Natural killer cell (primary cell): ENCODE measurements at regions of chr2 and their contacts with region 1.

Region 1: DNA sequence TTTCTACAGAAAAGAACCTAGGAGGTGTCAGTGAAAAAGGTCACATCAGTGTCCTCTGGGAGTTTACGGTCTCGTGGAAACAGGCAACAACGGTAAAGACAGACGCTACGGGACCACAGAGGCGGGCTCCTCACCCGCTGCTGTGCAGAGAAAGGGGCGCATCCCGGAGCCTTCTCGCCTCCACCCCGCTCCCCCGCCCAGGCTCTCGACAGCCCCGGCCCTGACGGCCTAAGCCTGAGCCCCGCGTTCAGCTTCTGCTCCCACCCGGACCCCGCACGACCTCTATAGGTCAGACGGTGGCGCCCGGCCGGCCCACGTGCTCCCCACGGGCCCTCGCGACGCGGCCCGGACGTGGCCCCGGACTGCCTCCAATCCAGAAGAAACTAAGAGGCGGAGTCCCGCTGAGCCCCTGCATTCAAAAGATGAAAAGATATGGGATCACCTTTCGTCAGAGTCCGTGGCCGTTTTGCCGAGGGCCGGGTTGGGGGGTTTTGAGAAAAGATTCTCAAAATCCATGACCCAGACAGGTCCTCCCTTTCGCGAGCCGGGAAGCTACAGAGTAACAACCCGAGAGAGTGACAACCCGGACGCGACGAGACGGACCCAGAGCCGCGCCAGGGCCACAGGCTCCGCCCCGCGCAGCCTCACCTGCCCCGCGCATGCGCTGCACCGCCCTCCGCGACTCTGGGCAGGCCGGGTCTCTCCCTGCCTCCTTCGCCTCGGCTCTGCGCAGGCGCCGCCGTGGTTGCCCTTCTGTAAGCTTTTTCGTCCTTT is at the start of gene ZC3H8:
- DNase-seq: peak; percentile 96 to 98
- ATAC-seq: peak; percentile 91 to 97 (median 92)
- H3K4me3 ChIP-seq: peak within 1 kb of the TSS; percentile 75
- H3K4me3 Mint-ChIP-seq: peak within 1 kb of the TSS; percentile 88
- H3K27ac ChIP-seq: peak within 1 kb of the TSS; percentile 92
- H3K27ac Mint-ChIP-seq: peak within 1 kb of the TSS; percentile 86 to 88
- H3K4me1 ChIP-seq: peaks cover 10% of the 10 kb centered on the region
- H3K4me1 Mint-ChIP-seq: peaks cover 11 to 16% of the 10 kb centered on the region in 2 donors
- H3K27me3 ChIP-seq: no peaks in the 10 kb centered on the region
- H3K27me3 Mint-ChIP-seq: no peaks in the 10 kb centered on the region
- CTCF ChIP-seq: peak; percentile 24
- total RNA-seq, gene ZC3H8: 9.3 to 20.3 (median 16.0) TPM

Region 2: DNA sequence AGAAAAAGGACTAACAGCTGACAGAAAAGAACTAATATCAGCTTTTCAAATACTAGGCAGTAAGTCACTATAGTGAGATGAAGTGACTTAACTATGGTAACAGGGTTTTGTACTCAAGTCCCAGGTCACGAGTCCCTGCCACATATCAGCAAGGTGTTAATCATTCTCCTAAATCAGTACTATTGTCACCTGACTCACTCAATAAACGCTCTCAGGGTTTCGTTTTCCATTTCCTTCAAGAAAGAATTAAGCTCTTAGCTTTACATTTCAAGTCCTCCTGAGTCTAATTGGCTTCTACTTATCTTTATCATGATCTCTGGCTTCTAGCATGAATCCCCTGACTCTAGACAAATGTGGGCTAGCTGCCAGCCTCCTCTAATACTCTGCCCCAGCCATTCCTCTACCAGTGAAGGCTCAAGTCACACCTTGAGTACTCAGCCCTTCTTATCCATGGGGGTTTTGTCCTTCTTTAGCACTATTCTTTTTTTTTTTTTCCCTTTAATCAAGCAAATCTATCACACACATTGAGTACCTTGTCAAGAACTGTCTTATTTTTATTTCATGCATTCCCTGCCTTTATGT is 1596.8 kb before region 1 on chr2:
- intact Hi-C with region 1: no loop called
- DNase-seq: peak in 1 of 2 donors; percentile 56
- ATAC-seq: peak; percentile 70 to 78 (median 75)
- H3K4me3 ChIP-seq: no peak overlapping the region
- H3K4me3 Mint-ChIP-seq: no peak overlapping the region
- H3K27ac ChIP-seq: no peak overlapping the region
- H3K27ac Mint-ChIP-seq: peak overlapping the region; percentile 23 to 54
- H3K4me1 ChIP-seq: peaks cover 3% of the 10 kb centered on the region
- H3K4me1 Mint-ChIP-seq: peaks cover 12% of the 10 kb centered on the region in 2 donors
- H3K27me3 ChIP-seq: no peaks in the 10 kb centered on the region
- H3K27me3 Mint-ChIP-seq: no peaks in the 10 kb centered on the region
- CTCF ChIP-seq: no peak

Region 3: GRCh38 chr2:112054847-112055729 is 199.6 kb before region 1 on chr2 and contains the start of gene TMEM87B:
- intact Hi-C with region 1: loop called (anchors 1 kb)
- DNase-seq: peak; percentile 88 to 98
- ATAC-seq: peak; percentile 65 to 86 (median 69)
- H3K4me3 ChIP-seq: peak within 1 kb of the TSS; percentile 74
- H3K4me3 Mint-ChIP-seq: peak within 1 kb of the TSS; percentile 97
- H3K27ac ChIP-seq: peak within 1 kb of the TSS; percentile 91
- H3K27ac Mint-ChIP-seq: peak within 1 kb of the TSS; percentile 92
- H3K4me1 ChIP-seq: peaks cover 15% of the 10 kb centered on the region
- H3K4me1 Mint-ChIP-seq: peaks cover 43 to 48% of the 10 kb centered on the region in 2 donors
- H3K27me3 ChIP-seq: no peaks in the 10 kb centered on the region
- H3K27me3 Mint-ChIP-seq: no peaks in the 10 kb centered on the region
- CTCF ChIP-seq: no peak
- total RNA-seq, gene TMEM87B: 9.6 to 15.7 (median 13.6) TPM

Region 4: DNA sequence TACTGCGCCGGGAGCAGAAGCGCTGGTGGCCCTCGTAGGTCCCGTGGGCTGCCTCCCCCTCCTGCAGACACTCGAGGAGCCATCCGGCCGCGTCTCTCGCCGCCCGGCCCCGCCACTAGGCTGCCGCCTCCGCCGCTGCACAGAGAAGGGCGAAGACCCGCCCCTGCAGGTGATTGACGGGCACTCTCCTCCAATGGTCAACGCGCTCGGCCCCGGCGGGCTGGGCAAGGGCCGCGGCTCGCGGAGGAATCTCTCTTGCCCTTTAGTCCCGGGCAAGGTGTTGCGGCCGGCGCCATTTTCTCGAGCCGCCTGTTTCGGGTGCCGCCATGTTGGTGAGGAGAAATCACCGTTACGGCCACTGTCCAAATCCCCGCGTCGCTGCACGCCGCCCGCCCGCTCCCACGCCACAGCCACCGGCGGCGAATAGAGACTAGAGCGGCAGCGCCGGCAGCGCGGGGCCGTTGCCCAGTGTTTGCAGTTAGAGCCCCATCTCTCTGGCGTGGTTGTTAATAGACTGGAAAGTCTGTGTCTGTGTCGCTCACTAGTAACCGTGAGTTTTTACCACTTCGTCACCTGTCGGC is 20.7 kb after region 1 on chr2 and contains the start of gene ZC3H6:
- intact Hi-C with region 1: loop called (anchors 1 kb)
- DNase-seq: peak; percentile 99 to 100
- ATAC-seq: peak; percentile 91 to 99 (median 92)
- H3K4me3 ChIP-seq: peak within 1 kb of the TSS; percentile 91
- H3K4me3 Mint-ChIP-seq: peak within 1 kb of the TSS; percentile 93
- H3K27ac ChIP-seq: peak within 1 kb of the TSS; percentile 99
- H3K27ac Mint-ChIP-seq: peak within 1 kb of the TSS; percentile 96 to 97
- H3K4me1 ChIP-seq: no peaks in the 10 kb centered on the region
- H3K4me1 Mint-ChIP-seq: no peaks in the 10 kb centered on the region
- H3K27me3 ChIP-seq: no peaks in the 10 kb centered on the region
- H3K27me3 Mint-ChIP-seq: no peaks in the 10 kb centered on the region
- CTCF ChIP-seq: peak; percentile 7
- total RNA-seq, gene ZC3H6: 13.1 to 17.3 (median 15.3) TPM

Region 5: GRCh38 chr2:112290088-112290487 is 35.4 kb after region 1 on chr2:
- intact Hi-C with region 1: no loop called
- DNase-seq: no peak
- ATAC-seq: no peak
- H3K4me3 ChIP-seq: no peak overlapping the region
- H3K4me3 Mint-ChIP-seq: no peak overlapping the region
- H3K27ac ChIP-seq: no peak overlapping the region
- H3K27ac Mint-ChIP-seq: no peak overlapping the region
- H3K4me1 ChIP-seq: no peaks in the 10 kb centered on the region
- H3K4me1 Mint-ChIP-seq: peaks cover 0 to 5% of the 10 kb centered on the region in 2 donors
- H3K27me3 ChIP-seq: no peaks in the 10 kb centered on the region
- H3K27me3 Mint-ChIP-seq: no peaks in the 10 kb centered on the region
- CTCF ChIP-seq: no peak

Region 6: GRCh38 chr2:112481050-112481527 is 226.4 kb after region 1 on chr2:
- intact Hi-C with region 1: loop called (anchors 5 kb)
- DNase-seq: peak; percentile 71 to 91
- ATAC-seq: peak; percentile 76 to 82 (median 77)
- H3K4me3 ChIP-seq: peak overlapping the region; percentile 72
- H3K4me3 Mint-ChIP-seq: peak overlapping the region; percentile 99
- H3K27ac ChIP-seq: peak overlapping the region; percentile 77
- H3K27ac Mint-ChIP-seq: peak overlapping the region; percentile 83 to 87
- H3K4me1 ChIP-seq: peaks cover 22% of the 10 kb centered on the region
- H3K4me1 Mint-ChIP-seq: peaks cover 30% of the 10 kb centered on the region in 2 donors
- H3K27me3 ChIP-seq: no peaks in the 10 kb centered on the region
- H3K27me3 Mint-ChIP-seq: no peaks in the 10 kb centered on the region
- CTCF ChIP-seq: peak; percentile 74

Region 7: DNA sequence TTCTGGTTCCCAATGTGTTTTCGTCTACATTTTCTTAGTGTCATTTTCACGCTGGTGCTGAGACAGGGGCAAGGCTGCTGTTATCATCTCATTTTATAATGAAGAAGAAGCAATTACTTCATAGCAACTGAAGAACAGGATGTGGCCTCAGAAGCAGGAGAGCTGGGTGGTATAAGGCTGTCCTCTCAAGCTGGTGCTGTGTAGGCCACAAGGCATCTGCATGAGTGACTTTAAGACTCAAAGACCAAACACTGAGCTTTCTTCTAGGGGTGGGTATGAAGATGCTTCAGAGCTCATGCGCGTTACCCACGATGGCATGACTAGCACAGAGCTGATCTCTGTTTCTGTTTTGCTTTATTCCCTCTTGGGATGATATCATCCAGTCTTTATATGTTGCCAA is 730.4 kb after region 1 on chr2:
- intact Hi-C with region 1: no loop called
- DNase-seq: peak in 1 of 2 donors; percentile 65
- ATAC-seq: peak; percentile 88 to 92 (median 88)
- H3K4me3 ChIP-seq: no peak overlapping the region
- H3K4me3 Mint-ChIP-seq: no peak overlapping the region
- H3K27ac ChIP-seq: no peak overlapping the region
- H3K27ac Mint-ChIP-seq: peak overlapping the region; percentile 45 to 75
- H3K4me1 ChIP-seq: no peaks in the 10 kb centered on the region
- H3K4me1 Mint-ChIP-seq: peaks cover 12 to 23% of the 10 kb centered on the region in 2 donors
- H3K27me3 ChIP-seq: no peaks in the 10 kb centered on the region
- H3K27me3 Mint-ChIP-seq: no peaks in the 10 kb centered on the region
- CTCF ChIP-seq: no peak